ENCODE measurements at regions of chr22 and their contacts with region 1.

Region 1: DNA sequence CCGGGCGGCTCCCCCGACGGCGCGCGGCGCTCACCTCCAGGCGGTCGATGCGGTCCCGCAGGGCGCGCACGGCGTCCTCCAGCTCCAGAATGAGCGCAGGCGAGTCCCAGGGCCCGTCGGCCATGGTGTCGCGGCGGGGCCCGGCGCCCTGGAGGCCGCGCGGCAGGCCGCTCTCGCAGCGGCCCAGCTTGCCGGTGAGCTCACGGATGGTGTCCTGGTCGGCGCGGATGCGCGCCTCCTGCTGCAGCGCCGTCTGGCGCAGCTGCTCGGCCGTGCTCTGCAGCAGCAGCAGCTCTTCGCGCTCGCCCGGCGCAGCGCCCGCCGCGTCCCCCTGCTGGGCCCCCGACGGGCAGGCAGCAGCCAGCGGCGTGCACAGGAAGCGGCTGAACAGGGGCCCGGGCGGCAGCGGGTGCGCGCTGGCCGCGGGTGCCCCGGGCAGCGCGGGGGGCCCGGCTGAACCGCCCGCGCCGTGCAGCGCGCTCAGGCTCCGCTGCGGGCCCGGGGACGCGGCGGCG is 570 bp downstream of the NPTXR start:
- DNase-seq: peak; percentile 28
- H3K4me3 ChIP-seq: peak overlapping the region in 3 of 4 donors; percentile 29 to 51 (median 41)
- H3K27ac ChIP-seq: peak overlapping the region; percentile 50 to 73 (median 62)
- H3K4me1 ChIP-seq: peaks cover 3 to 15% (median 11%) of the 10 kb centered on the region in 4 donors
- H3K27me3 ChIP-seq: peaks cover 59% of the 10 kb centered on the region
- CTCF ChIP-seq: peak in 3 of 5 experiments; percentile 14 to 22 (median 20)
- EP300 ChIP-seq: no peak
- POLR2A ChIP-seq: no peak

Region 2: DNA sequence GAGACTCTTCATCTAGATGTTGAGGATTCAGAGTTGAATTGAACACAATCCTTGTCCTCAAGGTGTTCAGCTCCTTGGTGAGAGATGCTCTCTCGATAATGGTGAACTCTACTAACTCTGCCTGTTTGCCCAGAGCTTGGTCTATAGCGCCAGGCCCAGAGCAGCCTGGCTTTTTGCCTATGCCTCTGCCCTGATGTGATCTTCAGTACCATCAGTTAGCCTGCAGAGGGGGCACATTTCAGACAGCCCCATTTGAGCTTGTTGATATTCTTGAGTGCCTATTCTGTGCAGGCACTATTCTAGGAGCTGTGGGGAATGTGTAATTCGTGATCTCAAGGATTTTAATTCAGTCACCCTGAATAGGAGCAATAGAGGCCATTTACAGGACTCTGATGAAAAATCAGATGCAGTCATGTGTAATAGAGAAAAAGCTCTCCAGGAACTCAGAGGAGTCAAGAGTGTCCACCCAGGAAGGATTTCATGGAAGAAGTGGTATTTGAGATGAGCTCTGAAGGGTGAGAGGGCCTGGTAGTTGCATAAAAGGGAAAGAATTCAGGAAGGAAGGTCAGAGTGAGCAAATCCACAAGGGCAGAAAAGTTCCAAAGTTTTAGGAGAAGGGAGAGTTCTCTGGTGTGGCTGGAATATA is 118.2 kb before region 1 on chr22:
- in situ Hi-C with region 1: no loop called
- intact Hi-C with region 1: no loop called
- DNase-seq: no peak
- H3K4me3 ChIP-seq: no peak overlapping the region
- H3K27ac ChIP-seq: no peak overlapping the region
- H3K4me1 ChIP-seq: no peaks in the 10 kb centered on the region
- H3K27me3 ChIP-seq: no peaks in the 10 kb centered on the region
- CTCF ChIP-seq: peak in 4 of 5 experiments; percentile 21 to 38 (median 34)
- EP300 ChIP-seq: no peak
- POLR2A ChIP-seq: no peak

Region 3: DNA sequence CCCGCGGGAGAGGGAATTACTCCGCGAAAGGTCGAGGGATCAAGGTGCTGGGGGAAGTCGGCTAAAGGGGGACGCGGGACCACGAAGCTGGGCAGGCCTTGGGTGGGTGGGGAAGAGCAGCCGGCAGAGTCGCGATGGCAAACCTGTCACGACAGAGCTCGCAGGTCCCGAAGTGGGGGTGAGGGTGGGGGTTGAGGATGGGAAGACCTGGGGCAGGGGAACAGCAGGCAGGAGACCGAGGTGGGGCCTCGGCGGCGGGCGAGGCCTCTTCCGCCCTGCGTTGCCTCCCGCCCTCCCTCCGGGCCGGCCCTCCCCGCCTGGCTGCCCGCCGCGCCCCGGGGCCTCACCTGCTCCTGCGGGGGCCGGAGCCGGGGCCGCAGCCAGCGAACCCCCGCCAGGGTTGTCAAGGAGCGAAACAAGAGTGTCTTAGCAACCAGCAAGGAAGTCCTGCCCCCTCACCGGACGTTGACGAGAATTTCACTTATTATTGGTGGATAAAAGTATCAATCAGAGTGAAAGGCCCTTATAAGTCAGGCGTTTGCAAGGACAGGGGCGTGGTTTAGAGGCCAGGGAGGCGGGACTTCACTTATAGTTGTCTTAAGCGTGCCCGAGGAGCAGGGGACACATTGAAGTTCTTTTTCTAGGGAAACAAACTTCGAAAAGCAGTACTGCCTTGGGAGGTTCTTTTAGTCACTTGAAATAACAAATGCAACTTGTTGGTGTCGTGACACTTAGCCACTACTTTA is 49.4 kb before region 1 on chr22 and contains the start of gene DNAL4:
- in situ Hi-C with region 1: no loop called
- intact Hi-C with region 1: loop called (anchors 10 kb)
- DNase-seq: peak; percentile 95
- H3K4me3 ChIP-seq: peak within 1 kb of the TSS; percentile 60 to 88 (median 72)
- H3K27ac ChIP-seq: peak within 1 kb of the TSS; percentile 72 to 89 (median 82)
- H3K4me1 ChIP-seq: peaks cover 3 to 15% (median 9%) of the 10 kb centered on the region in 4 donors
- H3K27me3 ChIP-seq: no peaks in the 10 kb centered on the region
- CTCF ChIP-seq: no peak
- EP300 ChIP-seq: no peak
- POLR2A ChIP-seq: peak; percentile 48
- total RNA-seq, gene DNAL4: 13.8 to 39.0 (median 19.3) TPM

Region 4: DNA sequence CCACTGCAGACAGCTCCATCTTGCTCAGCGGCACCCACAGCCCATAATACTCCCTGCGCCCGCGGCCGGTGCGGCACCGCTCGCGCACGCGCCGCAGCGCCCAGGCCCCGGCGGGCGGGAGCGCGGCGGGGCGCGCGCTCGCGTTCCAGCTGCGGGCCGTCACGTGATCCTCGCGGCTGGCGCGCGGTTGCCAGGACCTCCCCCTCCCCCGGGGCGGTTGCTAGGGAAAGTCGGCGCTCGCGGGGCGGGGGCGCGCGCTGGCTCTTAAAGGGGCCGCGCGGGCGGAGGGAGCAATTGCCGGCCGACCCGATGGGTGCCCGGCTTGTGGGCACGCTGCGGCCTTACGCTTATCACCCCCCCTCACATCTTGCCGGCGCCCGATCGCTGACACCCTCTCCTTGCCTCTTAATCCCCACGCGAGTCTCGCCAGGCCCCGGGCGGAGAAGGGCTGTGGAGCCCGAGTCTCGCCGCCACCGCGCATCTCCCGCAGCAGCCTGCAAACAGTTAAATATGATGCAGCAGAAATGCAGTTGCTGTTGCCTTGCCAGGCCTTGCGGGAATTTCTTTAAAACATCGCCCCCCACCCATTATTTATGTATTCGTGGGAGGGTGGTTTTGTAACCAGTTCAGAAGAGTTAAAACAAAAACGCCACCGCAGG is 29.0 kb after region 1 on chr22 and contains the start of gene CBX6:
- in situ Hi-C with region 1: no loop called
- intact Hi-C with region 1: no loop called
- DNase-seq: peak; percentile 93
- H3K4me3 ChIP-seq: peak within 1 kb of the TSS; percentile 54 to 71 (median 64)
- H3K27ac ChIP-seq: peak within 1 kb of the TSS; percentile 88 to 95 (median 90)
- H3K4me1 ChIP-seq: peaks cover 14 to 38% (median 21%) of the 10 kb centered on the region in 4 donors
- H3K27me3 ChIP-seq: peaks cover 36% of the 10 kb centered on the region
- CTCF ChIP-seq: no peak
- EP300 ChIP-seq: no peak
- POLR2A ChIP-seq: no peak
- total RNA-seq, gene CBX6: 14.5 to 42.6 (median 22.1) TPM

Measured in transverse colon (tissue), 4 donors.